IMR-90 (cell line): ENCODE measurements at regions of chr1 and their contacts with region 1.

Region 1: DNA sequence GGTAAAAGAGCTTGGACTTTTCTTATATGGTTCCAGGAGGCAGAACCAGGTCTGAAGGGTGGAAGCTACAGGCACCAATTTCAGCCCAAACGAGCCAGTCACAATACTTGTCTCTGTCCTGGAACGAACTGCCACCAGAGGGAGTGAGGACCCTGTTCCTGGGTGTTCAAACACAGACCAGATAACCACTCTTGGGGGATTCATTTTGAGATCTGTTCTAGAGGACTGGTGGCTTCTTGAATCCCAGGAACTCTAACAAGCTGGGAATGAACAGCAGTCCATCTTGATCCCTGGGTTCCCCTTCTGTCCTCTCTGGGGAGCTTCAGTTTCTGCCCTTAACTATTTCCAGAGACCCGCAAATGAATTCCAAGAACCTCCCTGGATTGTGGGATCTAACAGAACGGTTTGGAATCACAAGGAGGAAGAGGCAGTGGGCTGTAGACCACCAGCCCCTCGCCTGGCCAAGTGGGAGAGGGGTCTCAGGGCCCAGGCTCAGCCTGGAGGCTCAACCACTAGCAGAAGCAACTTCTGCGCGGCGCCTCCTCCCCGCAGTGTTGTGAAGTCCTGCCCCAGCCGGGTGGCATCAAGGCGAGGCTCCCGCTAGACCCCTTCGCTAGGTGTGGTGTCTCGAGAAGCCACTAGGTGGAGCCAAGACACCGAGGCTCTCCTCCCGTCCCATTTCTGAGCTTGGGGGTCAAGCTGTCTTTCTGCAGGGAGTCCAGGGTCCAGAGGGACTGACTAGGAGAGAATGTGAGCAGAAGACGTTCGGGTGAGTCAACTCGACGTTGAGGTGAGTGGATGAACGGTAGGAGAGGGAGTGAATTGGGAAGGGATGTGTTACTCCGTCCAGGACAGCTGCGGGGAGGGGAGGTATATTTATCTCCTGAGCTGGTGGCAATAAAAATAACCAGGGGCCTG is 12.1 kb upstream of the NES start:
- DNase-seq: peak; percentile 80
- ATAC-seq: peak; percentile 96
- H3K4me3 ChIP-seq: peak overlapping the region; percentile 13; the same call in 1 of the 2 replicates
- H3K27ac ChIP-seq: no peak overlapping the region
- H3K4me1 ChIP-seq: peaks cover 7% of the 10 kb centered on the region; the same call in 1 of the 2 replicates
- H3K27me3 ChIP-seq: peaks cover 3% of the 10 kb centered on the region; the same call in 1 of the 2 replicates
- CTCF ChIP-seq: peak; percentile 96
- POLR2A ChIP-seq: no peak
- RAD21 ChIP-seq: peak; percentile 98

Region 2: GRCh38 chr1:156705918-156706656 is 16.8 kb after region 1 on chr1:
- CTCF ChIA-PET with region 1: interaction called, 54 read pairs
- POLR2A ChIA-PET with region 1: no interaction called
- dilution Hi-C with region 1: no loop called
- in situ Hi-C with region 1: no loop called
- intact Hi-C with region 1: loop called (anchors 1 kb)
- DNase-seq: peak; percentile 34
- ATAC-seq: peak; percentile 24
- H3K4me3 ChIP-seq: peak overlapping the region; percentile 15; the same call in 1 of the 2 replicates
- H3K27ac ChIP-seq: peak overlapping the region; percentile 10; the same call in 1 of the 2 replicates
- H3K4me1 ChIP-seq: peaks cover 48% of the 10 kb centered on the region
- H3K27me3 ChIP-seq: peaks cover 5% of the 10 kb centered on the region
- CTCF ChIP-seq: peak; percentile 69
- POLR2A ChIP-seq: no peak
- RAD21 ChIP-seq: peak; percentile 61

Region 3: GRCh38 chr1:156711011-156711817 is 21.9 kb after region 1 on chr1:
- CTCF ChIA-PET with region 1: interaction called, 54 read pairs
- POLR2A ChIA-PET with region 1: no interaction called
- dilution Hi-C with region 1: no loop called
- in situ Hi-C with region 1: no loop called
- intact Hi-C with region 1: no loop called
- DNase-seq: no peak
- ATAC-seq: no peak
- H3K4me3 ChIP-seq: no peak overlapping the region
- H3K27ac ChIP-seq: no peak overlapping the region
- H3K4me1 ChIP-seq: peaks cover 34% of the 10 kb centered on the region
- H3K27me3 ChIP-seq: no peaks in the 10 kb centered on the region
- CTCF ChIP-seq: no peak
- POLR2A ChIP-seq: no peak
- RAD21 ChIP-seq: no peak

Region 4: DNA sequence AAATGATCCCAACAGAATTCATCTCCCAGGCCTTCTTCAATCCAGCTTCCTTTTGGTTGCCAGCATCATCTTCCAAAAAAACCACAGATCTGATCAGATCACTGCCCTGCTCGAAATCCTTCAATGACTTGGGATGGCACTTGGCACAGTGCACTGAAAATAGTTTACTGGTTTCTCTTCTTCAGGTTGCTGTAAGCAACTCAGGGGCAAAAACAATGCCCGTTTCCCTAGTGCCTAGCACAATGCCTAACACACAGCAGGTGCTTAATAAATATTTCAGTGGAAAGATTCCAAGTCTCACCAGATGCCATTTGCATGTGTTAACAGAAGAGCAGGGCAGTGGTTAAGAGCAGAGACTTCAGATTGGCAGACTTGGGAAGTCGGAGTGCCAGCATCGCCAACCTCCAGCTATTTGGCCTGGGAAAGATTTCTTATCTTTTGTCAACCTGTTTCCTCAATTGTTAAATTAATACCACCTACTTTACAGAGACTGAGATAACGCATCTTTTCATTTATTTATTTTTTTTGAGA is 28.0 kb after region 1 on chr1:
- CTCF ChIA-PET with region 1: interaction called, 24 read pairs
- POLR2A ChIA-PET with region 1: no interaction called
- dilution Hi-C with region 1: no loop called
- in situ Hi-C with region 1: loop called (anchors 5 kb)
- intact Hi-C with region 1: no loop called
- DNase-seq: no peak
- ATAC-seq: no peak
- H3K4me3 ChIP-seq: no peak overlapping the region
- H3K27ac ChIP-seq: no peak overlapping the region
- H3K4me1 ChIP-seq: peaks cover 4% of the 10 kb centered on the region; the same call in 1 of the 2 replicates
- H3K27me3 ChIP-seq: no peaks in the 10 kb centered on the region
- CTCF ChIP-seq: no peak
- POLR2A ChIP-seq: no peak
- RAD21 ChIP-seq: no peak

Region 5: DNA sequence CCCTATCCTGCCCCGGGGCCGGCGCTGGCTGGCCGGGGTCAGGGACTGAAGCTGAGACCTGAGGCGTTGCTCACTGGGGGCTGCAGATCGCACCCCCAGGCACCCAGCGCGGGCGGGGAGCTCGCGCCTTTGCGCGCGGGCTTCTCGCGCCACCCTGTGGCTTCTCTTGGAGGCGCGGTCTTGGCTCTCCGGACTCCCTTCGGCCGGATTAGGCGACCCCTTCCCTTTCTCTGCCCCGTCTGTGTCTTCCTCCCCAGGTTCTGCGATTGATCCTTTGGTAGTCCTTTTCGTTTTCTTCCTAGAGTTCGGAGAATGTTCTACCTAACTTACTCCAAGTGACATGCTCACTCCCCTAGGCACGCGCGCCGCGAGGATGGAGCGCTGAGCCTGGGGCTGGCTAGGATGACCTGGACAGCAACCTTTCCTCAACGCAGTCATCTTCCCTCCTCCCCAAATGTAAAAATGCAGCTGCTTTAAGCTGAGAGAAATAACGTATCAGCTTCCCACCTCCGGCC is 170.9 kb after region 1 on chr1:
- CTCF ChIA-PET with region 1: interaction called, 19 read pairs
- POLR2A ChIA-PET with region 1: no interaction called
- dilution Hi-C with region 1: no loop called
- in situ Hi-C with region 1: no loop called
- intact Hi-C with region 1: loop called (anchors 1 kb)
- DNase-seq: peak; percentile 21
- ATAC-seq: peak; percentile 86
- H3K4me3 ChIP-seq: peak overlapping the region; percentile 13; the same call in 1 of the 2 replicates
- H3K27ac ChIP-seq: no peak overlapping the region
- H3K4me1 ChIP-seq: peaks cover 4% of the 10 kb centered on the region; the same call in 1 of the 2 replicates
- H3K27me3 ChIP-seq: peaks cover 88% of the 10 kb centered on the region
- CTCF ChIP-seq: peak; percentile 67
- POLR2A ChIP-seq: no peak
- RAD21 ChIP-seq: peak; percentile 80

Region 6: GRCh38 chr1:156892190-156893047 is 203.1 kb after region 1 on chr1:
- CTCF ChIA-PET with region 1: interaction called, 5 read pairs
- POLR2A ChIA-PET with region 1: no interaction called
- dilution Hi-C with region 1: no loop called
- in situ Hi-C with region 1: loop called (anchors 10 kb)
- intact Hi-C with region 1: loop called (anchors 1 kb)
- DNase-seq: peak; percentile 85
- ATAC-seq: peak; percentile 67
- H3K4me3 ChIP-seq: peak overlapping the region; percentile 16; the same call in 1 of the 2 replicates
- H3K27ac ChIP-seq: no peak overlapping the region; the same call in 1 of the 2 replicates
- H3K4me1 ChIP-seq: peaks cover 23% of the 10 kb centered on the region
- H3K27me3 ChIP-seq: peaks cover 14% of the 10 kb centered on the region
- CTCF ChIP-seq: peak; percentile 88
- POLR2A ChIP-seq: 0 out of 2 replicates have a peak, but pooled peaks have one; percentile 26
- RAD21 ChIP-seq: peak; percentile 76

Region 7: GRCh38 chr1:156927215-156928042 is 238.1 kb after region 1 on chr1:
- CTCF ChIA-PET with region 1: interaction called, 12 read pairs
- POLR2A ChIA-PET with region 1: no interaction called
- dilution Hi-C with region 1: no loop called
- in situ Hi-C with region 1: no loop called
- intact Hi-C with region 1: loop called (anchors 1 kb)
- DNase-seq: peak; percentile 64
- ATAC-seq: peak; percentile 87
- H3K4me3 ChIP-seq: peak overlapping the region; percentile 39
- H3K27ac ChIP-seq: no peak overlapping the region
- H3K4me1 ChIP-seq: no peaks in the 10 kb centered on the region
- H3K27me3 ChIP-seq: peaks cover 42% of the 10 kb centered on the region
- CTCF ChIP-seq: peak; percentile 88
- POLR2A ChIP-seq: no peak
- RAD21 ChIP-seq: peak; percentile 86